Prostate gland (tissue), 2 donors: ENCODE measurements at regions of chr7 and their contacts with region 1.

Region 1: GRCh38 chr7:139133335-139134139 is 24.0 kb upstream of the ZC3HAV1 start:
- DNase-seq: peak; percentile 74
- H3K4me3 ChIP-seq: peak overlapping the region; percentile 37 to 44
- H3K27ac ChIP-seq: peak overlapping the region; percentile 58 to 65
- H3K4me1 ChIP-seq: no peaks in the 10 kb centered on the region
- H3K27me3 ChIP-seq: no peaks in the 10 kb centered on the region
- CTCF ChIP-seq: no peak
- POLR2A ChIP-seq: no peak

Region 2: GRCh38 chr7:138875794-138876193 is 257.7 kb before region 1 on chr7:
- intact Hi-C with region 1: no loop called
- DNase-seq: no peak
- H3K4me3 ChIP-seq: no peak overlapping the region
- H3K27ac ChIP-seq: no peak overlapping the region
- H3K4me1 ChIP-seq: no peaks in the 10 kb centered on the region
- H3K27me3 ChIP-seq: no peaks in the 10 kb centered on the region
- CTCF ChIP-seq: no peak
- POLR2A ChIP-seq: no peak

Region 3: GRCh38 chr7:139230774-139231512 is 97.4 kb after region 1 on chr7 and contains the start of gene UBN2:
- intact Hi-C with region 1: loop called (anchors 5 kb)
- DNase-seq: peak; percentile 94
- H3K4me3 ChIP-seq: peak within 1 kb of the TSS; percentile 98 to 100
- H3K27ac ChIP-seq: peak within 1 kb of the TSS; percentile 96 to 98
- H3K4me1 ChIP-seq: no peaks in the 10 kb centered on the region
- H3K27me3 ChIP-seq: no peaks in the 10 kb centered on the region
- CTCF ChIP-seq: peak in 1 of 4 experiments; percentile 11
- POLR2A ChIP-seq: peak; percentile 90
- total RNA-seq, gene UBN2: 13.9 to 25.2 TPM